ENCODE measurements at regions of chr7 and their contacts with region 1.

Region 1: DNA sequence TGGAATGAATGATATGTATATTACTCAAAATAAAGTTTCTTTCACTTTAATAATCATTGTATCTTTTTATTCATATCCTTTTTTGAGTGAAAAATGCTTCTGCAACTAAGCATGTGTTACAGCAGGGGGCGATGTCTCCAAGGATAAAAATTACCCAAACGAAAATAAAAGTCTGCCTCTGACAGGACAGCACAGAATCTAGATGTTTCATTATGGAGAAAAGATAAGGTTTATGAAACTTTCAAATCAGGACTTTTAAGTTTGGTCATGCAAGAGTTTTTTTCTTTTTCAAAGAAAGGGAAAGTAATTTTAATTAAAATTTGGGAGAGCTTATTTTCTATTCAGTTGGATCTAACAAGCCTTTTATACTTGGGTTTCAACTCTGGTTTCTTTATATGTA is 48.4 kb downstream of the TES start:
- DNase-seq: peak; percentile 36 to 80
- ATAC-seq: peak in 1 of 2 experiments; percentile 39; a peak in 3 of 6 replicates
- H3K4me3 ChIP-seq: no peak overlapping the region
- H3K27ac ChIP-seq: peak overlapping the region; percentile 73 to 88
- H3K4me1 ChIP-seq: peaks cover 32% of the 10 kb centered on the region
- CTCF ChIP-seq: peak; percentile 94
- EP300 ChIP-seq: no peak
- POLR2A ChIP-seq: no peak
- RAD21 ChIP-seq: peak; percentile 99

Region 2: DNA sequence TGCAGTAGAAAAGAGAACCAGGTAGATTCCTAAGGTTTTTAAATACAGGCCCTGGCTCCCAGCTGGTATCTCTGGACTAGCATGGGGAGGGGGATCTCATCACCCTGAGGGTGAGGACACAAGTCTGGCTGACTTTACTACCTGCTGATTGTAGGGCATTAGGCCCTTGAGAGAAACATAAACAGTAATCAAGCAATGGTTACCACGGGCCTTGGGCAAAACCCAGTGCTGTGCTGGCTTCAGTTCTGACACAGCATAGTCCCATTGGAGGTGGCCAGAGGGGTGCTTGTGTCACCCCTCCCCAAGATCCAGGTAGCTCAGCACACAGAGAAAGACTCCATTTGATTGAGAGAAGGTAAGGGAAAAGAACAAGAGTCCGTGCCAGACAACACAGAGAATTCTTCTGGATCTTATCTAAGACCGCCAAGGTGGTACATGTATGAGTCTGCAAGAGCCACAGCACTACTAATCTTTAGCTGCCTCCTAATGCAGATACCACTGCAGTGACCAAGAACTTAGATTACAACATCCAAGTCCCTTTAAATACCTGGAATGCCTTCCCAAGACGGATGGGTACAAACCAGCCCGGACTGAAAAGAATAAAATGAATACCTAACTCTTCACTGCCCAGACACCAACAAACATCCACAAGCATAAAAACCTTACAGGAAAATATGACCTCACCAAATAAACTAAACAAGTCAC is 261.7 kb before region 1 on chr7:
- CTCF ChIA-PET with region 1: no interaction called
- POLR2A ChIA-PET with region 1: no interaction called
- DNase-seq: no peak
- ATAC-seq: no peak
- H3K4me3 ChIP-seq: no peak overlapping the region
- H3K27ac ChIP-seq: no peak overlapping the region
- H3K4me1 ChIP-seq: no peaks in the 10 kb centered on the region
- CTCF ChIP-seq: no peak
- EP300 ChIP-seq: no peak
- POLR2A ChIP-seq: no peak
- RAD21 ChIP-seq: no peak

Region 3: DNA sequence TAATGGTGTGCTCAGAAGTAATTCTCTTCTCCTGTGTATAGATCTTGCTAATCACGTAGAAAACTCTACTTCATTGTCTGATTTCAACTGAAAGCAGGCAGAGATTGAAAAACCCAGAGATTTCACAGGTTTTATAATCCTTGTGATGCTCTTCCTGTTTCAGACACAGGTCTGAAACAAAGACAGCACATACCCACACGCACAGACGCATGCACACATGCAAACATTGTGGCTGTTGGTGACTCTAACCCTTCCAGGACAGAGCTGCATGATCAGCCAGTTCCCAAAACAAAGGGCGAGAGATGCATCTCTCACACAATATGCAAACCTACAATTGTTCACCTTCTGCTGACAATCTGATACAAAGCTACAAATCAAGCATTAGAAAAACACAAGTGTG is 217.1 kb before region 1 on chr7:
- CTCF ChIA-PET with region 1: no interaction called
- POLR2A ChIA-PET with region 1: no interaction called
- DNase-seq: no peak
- ATAC-seq: no peak
- H3K4me3 ChIP-seq: no peak overlapping the region
- H3K27ac ChIP-seq: no peak overlapping the region
- H3K4me1 ChIP-seq: no peaks in the 10 kb centered on the region
- CTCF ChIP-seq: no peak
- EP300 ChIP-seq: no peak
- POLR2A ChIP-seq: no peak
- RAD21 ChIP-seq: no peak

Region 4: GRCh38 chr7:116180302-116180701 is 78.4 kb before region 1 on chr7:
- CTCF ChIA-PET with region 1: interaction called, 11 read pairs
- POLR2A ChIA-PET with region 1: no interaction called
- DNase-seq: peak; percentile 36 to 62
- ATAC-seq: peak; percentile 84 to 88
- H3K4me3 ChIP-seq: no peak overlapping the region
- H3K27ac ChIP-seq: no peak overlapping the region
- H3K4me1 ChIP-seq: peaks cover 14% of the 10 kb centered on the region
- CTCF ChIP-seq: peak; percentile 91
- EP300 ChIP-seq: no peak
- POLR2A ChIP-seq: no peak
- RAD21 ChIP-seq: peak; percentile 89 to 94

Region 5: DNA sequence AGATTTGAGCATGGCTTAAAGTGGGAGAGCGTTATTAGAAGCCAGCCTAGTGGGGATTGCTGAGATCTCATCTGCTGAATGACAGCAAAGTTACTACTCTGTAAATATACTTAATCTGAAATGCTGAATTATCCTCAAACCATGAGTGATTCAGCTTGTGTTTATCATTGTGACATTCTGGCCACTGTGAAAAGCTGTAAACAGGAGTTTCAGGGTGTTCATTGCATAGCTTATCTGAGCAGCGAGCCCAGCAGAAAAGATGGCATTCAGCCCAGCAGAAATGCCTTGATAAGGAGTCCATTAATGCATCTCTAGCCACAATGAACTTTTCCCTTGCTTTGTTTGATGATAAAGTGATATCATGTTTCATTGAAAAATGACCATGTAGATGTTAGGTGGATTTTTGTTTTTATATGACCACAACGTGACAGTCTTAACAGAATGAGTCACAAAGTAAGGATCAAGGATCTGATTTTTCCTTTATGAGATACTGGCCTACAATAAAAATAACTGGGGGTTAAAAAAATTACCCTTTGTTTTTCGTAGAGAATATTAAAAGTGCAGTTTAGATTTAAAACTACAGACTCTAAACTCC is 40.6 kb before region 1 on chr7:
- CTCF ChIA-PET with region 1: no interaction called
- POLR2A ChIA-PET with region 1: no interaction called
- DNase-seq: peak in 1 of 2 experiments; percentile 88
- ATAC-seq: peak; percentile 85 to 89
- H3K4me3 ChIP-seq: peak overlapping the region; percentile 7; the same call in 1 of the 3 replicates
- H3K27ac ChIP-seq: peak overlapping the region; percentile 11 to 65; a peak in 4 of 6 replicates
- H3K4me1 ChIP-seq: peaks cover 66% of the 10 kb centered on the region
- CTCF ChIP-seq: no peak
- EP300 ChIP-seq: peak in 1 of 2 experiments; percentile 34; a peak in 1 of 5 replicates
- POLR2A ChIP-seq: no peak
- RAD21 ChIP-seq: 0 out of 5 replicates have a peak, but pooled peaks of 1 of the 2 experiments have one; percentile 4

Region 6: GRCh38 chr7:116271963-116272839 is 13.5 kb after region 1 on chr7:
- CTCF ChIA-PET with region 1: interaction called, 16 read pairs
- POLR2A ChIA-PET with region 1: interaction called, 16 read pairs
- DNase-seq: peak; percentile 84 to 93
- ATAC-seq: peak; percentile 89 to 97
- H3K4me3 ChIP-seq: peak overlapping the region; percentile 11; the same call in 1 of the 3 replicates
- H3K27ac ChIP-seq: peak overlapping the region; percentile 90
- H3K4me1 ChIP-seq: peaks cover 73% of the 10 kb centered on the region
- CTCF ChIP-seq: no peak
- EP300 ChIP-seq: peak; percentile 66 to 82; a peak in 2 of 5 replicates
- POLR2A ChIP-seq: no peak
- RAD21 ChIP-seq: peak in 1 of 2 experiments; percentile 38; a peak in 3 of 5 replicates

Region 7: DNA sequence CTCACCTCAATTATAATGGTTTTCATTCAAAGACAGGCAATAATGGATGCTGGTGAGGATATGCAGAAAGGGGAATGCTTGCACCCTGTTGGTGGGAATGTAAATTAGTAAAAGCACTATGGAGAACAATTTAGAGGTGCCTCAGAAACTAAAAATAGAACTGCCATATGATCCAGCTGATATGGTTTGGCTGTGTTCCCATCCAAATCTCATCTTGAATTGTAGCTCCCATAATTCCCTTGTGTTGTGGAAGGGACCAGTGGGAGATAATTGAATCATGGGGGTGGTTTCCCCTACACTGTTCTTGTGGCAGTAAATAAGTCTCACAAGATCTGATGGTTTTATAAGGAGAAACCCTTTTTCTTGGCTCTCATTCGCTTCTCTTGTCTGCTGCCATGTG is 39.3 kb after region 1 on chr7:
- CTCF ChIA-PET with region 1: interaction called, 3 read pairs
- POLR2A ChIA-PET with region 1: interaction called, 12 read pairs
- DNase-seq: no peak
- ATAC-seq: no peak
- H3K4me3 ChIP-seq: no peak overlapping the region
- H3K27ac ChIP-seq: no peak overlapping the region
- H3K4me1 ChIP-seq: peaks cover 7% of the 10 kb centered on the region; the same call in 1 of the 3 replicates
- CTCF ChIP-seq: no peak
- EP300 ChIP-seq: no peak
- POLR2A ChIP-seq: no peak
- RAD21 ChIP-seq: no peak

Region 8: DNA sequence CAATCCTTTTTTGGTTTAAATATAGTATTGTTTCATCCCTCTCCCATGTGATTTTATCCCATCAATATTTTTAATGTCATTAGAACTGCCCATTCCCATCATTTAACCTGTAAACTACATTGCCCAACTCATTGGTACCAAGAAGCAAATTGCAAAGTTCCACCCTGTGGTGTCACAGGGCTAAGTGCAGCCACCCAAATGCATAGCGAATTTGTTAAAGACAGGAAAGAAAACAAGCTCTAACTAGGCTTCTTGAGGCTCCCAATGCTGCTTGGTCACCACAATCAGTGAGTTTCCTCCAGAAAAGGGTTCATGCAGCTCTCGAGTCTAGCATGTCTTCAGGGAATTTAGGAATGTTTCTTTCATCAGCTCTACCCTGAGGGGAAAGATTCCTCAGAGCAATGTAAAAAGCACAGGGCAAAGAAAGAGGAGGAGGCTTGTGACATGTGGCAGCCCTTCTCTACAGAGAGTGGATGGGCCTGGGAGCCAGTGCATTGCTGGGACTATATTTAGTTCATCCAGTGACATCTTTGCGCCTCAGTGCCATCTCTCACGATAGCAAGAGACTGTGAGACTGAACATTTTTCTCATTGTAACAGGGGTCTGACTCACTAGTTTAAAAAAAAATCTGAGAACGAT is 324.2 kb after region 1 on chr7:
- CTCF ChIA-PET with region 1: interaction called, 75 read pairs
- POLR2A ChIA-PET with region 1: no interaction called
- DNase-seq: peak in 1 of 2 experiments; percentile 30
- ATAC-seq: peak; percentile 72 to 78
- H3K4me3 ChIP-seq: no peak overlapping the region
- H3K27ac ChIP-seq: peak overlapping the region; percentile 68 to 79
- H3K4me1 ChIP-seq: peaks cover 24% of the 10 kb centered on the region
- CTCF ChIP-seq: no peak
- EP300 ChIP-seq: no peak
- POLR2A ChIP-seq: no peak
- RAD21 ChIP-seq: no peak

Region 9: GRCh38 chr7:116809636-116810266 is 551.0 kb after region 1 on chr7:
- CTCF ChIA-PET with region 1: interaction called, 11 read pairs
- POLR2A ChIA-PET with region 1: no interaction called
- DNase-seq: peak in 1 of 2 experiments; percentile 79
- ATAC-seq: peak; percentile 84 to 86
- H3K4me3 ChIP-seq: no peak overlapping the region
- H3K27ac ChIP-seq: peak overlapping the region; percentile 67 to 68
- H3K4me1 ChIP-seq: peaks cover 77% of the 10 kb centered on the region
- CTCF ChIP-seq: peak; percentile 92
- EP300 ChIP-seq: no peak
- POLR2A ChIP-seq: no peak
- RAD21 ChIP-seq: peak; percentile 93 to 96

Measured in A549 (cell line).